Activated CD8-positive, alpha-beta T cell treated with anti-CD3 and anti-CD28 coated beads, Interleukin-2, amount 10 ng/mL, durations not matched to agents 7 days and 5 days (primary cell): ENCODE measurements at regions of chr7 and their contacts with region 1.

Region 1: DNA sequence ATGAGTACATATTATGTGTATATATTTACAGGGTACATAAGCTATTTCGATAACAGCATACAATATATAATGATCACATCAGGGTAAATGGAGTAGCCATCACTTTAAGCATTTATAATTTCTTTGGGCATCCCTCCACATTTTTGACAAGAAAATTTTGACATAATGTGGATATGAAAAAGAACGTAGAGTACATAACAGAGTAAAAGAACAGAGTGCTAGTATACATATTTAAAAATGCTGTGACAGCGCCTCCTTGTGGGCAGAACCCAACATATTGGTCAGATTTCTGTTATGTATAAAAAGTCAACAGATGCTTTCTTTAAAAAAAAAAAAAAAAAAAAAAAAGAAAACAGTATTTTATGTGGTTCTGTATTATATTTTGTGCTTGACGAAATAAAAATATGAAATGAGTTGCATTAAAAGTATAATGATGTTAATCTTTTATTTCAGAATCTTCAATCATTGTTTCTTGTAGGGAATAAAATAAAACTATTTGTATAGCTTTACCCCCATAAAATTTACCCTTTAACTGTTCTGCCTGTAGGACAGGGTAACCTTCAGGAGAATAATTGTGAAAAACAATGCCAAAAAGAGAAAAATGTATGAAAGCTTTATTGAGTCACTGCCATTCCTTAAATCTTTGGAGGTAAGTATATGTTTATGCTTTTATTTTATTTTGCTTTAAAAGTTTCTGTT is 18.3 kb upstream of the HBP1 start:
- DNase-seq: peak; percentile 87
- ATAC-seq: peak; percentile 75
- H3K4me3 Mint-ChIP-seq: no peak overlapping the region
- H3K27ac Mint-ChIP-seq: no peak overlapping the region
- H3K4me1 Mint-ChIP-seq: peaks cover 2% of the 10 kb centered on the region
- H3K27me3 Mint-ChIP-seq: no peaks in the 10 kb centered on the region

Region 2: DNA sequence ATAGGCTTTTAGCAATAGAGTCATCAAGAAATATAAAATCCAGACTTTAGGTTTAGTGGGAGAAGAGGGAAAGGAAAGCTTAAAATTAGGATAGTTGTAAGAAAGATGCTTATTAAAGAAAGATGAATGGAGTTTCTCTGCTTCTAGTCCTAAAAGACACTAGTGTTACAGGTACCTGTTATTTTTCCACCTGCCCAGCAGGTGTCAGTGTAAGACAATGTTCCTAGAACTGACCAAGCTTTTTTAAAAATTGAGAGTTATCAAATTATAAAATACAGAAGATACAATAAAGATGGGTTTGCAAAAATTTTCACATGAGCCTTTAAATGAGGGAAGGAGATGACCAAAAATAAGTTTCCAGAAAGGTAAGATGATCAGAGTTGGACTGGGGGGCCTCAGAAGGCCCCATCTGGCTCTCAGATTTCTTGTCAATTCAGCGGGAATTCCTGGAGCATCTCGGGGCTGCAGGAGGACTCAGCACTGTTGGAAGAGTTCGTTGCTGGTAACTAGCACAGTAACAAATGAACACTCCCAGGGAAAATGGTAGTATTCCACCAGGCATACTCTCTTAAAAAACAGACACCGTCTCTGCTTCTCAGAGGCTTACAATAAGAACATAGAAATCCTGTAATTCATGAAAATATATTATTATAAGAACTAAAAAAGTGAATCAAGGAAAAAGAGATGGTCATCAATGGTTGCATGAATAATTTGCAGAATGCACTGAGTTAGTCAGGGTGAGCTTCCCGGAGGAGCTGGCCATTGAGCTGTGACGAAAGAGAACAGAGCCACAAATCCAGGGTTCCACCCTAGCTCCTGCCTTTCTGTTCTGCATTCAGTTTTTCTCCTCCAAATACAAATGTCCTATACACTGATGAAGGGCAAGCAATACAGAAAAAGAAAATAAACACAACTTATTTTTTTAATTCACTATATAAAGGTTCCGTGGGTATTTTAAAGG is 357.2 kb before region 1 on chr7:
- CTCF ChIA-PET with region 1: interaction called, 81 read pairs
- POLR2A ChIA-PET with region 1: no interaction called
- DNase-seq: peak; percentile 58
- ATAC-seq: no peak
- H3K4me3 Mint-ChIP-seq: no peak overlapping the region
- H3K27ac Mint-ChIP-seq: no peak overlapping the region
- H3K4me1 Mint-ChIP-seq: no peaks in the 10 kb centered on the region
- H3K27me3 Mint-ChIP-seq: no peaks in the 10 kb centered on the region

Region 3: DNA sequence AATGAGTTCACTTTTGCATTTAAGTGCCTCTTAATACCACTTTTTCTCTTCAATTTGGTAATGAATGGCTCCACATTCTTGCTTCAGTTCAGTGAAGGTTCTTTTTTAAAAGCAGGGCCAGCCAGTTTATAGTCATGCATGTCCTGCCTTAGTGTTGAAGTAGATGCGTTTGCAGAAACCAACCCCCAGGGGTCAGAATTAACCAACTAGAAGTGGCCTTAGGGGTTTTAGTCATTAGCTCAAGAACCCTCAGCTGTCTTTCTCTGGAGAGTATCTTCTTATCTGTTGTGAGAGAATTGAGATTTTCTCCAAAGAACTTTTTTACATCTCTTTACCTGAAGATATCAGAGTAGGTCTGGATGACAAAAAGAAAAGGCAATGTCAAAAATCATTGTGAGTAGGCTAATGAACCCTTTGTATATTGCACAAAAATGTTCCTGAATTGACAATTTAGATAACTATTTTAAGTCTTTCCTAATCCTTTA is 203.2 kb before region 1 on chr7:
- CTCF ChIA-PET with region 1: interaction called, 48 read pairs
- POLR2A ChIA-PET with region 1: no interaction called
- DNase-seq: peak; percentile 50
- ATAC-seq: no peak
- H3K4me3 Mint-ChIP-seq: no peak overlapping the region
- H3K27ac Mint-ChIP-seq: no peak overlapping the region
- H3K4me1 Mint-ChIP-seq: no peaks in the 10 kb centered on the region
- H3K27me3 Mint-ChIP-seq: peaks cover 8% of the 10 kb centered on the region

Region 4: GRCh38 chr7:106968160-106968559 is 182.4 kb before region 1 on chr7:
- CTCF ChIA-PET with region 1: no interaction called
- POLR2A ChIA-PET with region 1: no interaction called
- DNase-seq: no peak
- ATAC-seq: no peak
- H3K4me3 Mint-ChIP-seq: no peak overlapping the region
- H3K27ac Mint-ChIP-seq: no peak overlapping the region
- H3K4me1 Mint-ChIP-seq: no peaks in the 10 kb centered on the region
- H3K27me3 Mint-ChIP-seq: peaks cover 4% of the 10 kb centered on the region

Region 5: DNA sequence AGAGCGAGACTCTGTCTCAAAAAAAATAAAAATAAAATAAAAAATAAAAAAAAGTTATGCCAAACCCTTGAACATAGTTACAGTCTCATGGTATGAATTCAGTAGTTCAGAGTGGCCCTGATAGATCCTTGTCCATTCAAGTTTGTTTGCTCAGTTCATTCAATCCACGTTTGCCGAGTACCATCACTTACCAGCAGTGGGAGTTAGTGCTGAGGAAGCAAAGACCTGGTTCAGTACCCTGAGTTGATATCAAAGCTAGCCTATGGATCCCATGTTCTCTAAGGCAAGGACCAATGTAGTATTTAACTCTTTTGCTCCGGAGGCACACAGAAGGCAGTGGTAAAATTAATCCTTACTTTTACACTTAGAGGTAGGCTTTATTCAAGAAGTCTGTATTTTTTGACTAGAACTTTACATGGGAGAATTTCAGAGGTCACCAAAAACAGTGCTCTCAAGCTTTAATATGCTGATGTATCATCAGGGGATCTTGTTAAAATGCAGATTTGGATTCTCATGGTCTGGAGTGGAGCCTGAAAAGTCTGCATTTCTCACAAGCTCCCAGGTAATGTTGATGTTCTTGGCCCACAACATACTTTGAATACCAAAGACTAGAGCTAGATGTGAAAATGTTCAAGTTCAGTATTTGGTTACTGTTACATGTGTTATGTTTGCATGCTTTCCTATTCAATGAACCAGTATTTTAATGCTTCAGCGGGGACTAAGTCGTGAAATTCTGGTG is 19.9 kb before region 1 on chr7:
- CTCF ChIA-PET with region 1: interaction called, 44 read pairs
- POLR2A ChIA-PET with region 1: interaction called, 5 read pairs
- DNase-seq: no peak
- ATAC-seq: no peak
- H3K4me3 Mint-ChIP-seq: no peak overlapping the region
- H3K27ac Mint-ChIP-seq: no peak overlapping the region
- H3K4me1 Mint-ChIP-seq: peaks cover 17% of the 10 kb centered on the region
- H3K27me3 Mint-ChIP-seq: peaks cover 5% of the 10 kb centered on the region

Region 6: DNA sequence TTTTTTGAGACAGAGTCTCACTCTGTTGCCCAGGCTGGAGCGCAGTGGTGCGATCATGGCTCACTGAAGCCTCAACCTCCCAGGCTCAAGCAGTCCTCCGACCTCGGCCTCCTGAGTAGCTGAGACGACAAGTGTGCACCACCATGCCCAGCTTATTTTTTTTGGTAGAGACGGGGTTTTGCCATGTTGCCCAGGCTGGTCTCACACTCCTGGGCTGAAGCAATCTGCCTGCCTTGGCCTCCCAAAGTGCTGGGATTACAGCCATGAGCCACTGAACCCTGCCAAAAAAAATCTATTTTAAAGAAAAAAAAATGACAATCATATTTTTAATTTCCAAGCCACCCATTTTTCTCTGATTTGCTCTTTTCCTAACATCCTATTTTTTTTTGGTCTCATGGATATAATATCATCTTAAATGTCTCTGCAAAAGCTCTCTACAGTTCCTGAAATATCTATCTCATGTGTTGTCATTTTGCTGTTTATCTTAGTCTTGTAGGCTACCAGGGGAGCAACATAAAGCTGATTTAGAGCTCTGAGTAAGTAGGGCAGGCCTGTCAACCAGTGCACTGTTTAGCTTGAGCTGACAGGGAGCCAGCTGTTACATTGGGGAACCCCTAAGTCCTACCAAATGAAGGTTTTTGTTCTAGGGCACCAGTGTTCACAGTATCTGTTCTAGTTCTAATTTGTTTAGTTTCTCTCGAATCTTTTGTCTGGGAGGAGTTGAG is 11.7 kb before region 1 on chr7:
- CTCF ChIA-PET with region 1: interaction called, 44 read pairs
- POLR2A ChIA-PET with region 1: no interaction called
- DNase-seq: no peak
- ATAC-seq: no peak
- H3K4me3 Mint-ChIP-seq: no peak overlapping the region
- H3K27ac Mint-ChIP-seq: no peak overlapping the region
- H3K4me1 Mint-ChIP-seq: no peaks in the 10 kb centered on the region
- H3K27me3 Mint-ChIP-seq: peaks cover 24% of the 10 kb centered on the region

Region 7: GRCh38 chr7:107173691-107174406 is 23.3 kb after region 1 on chr7:
- CTCF ChIA-PET with region 1: interaction called, 10 read pairs
- POLR2A ChIA-PET with region 1: interaction called, 5 read pairs
- DNase-seq: no peak
- ATAC-seq: no peak
- H3K4me3 Mint-ChIP-seq: peak overlapping the region; percentile 26
- H3K27ac Mint-ChIP-seq: peak overlapping the region; percentile 48
- H3K4me1 Mint-ChIP-seq: peaks cover 37% of the 10 kb centered on the region
- H3K27me3 Mint-ChIP-seq: no peaks in the 10 kb centered on the region